Activated naive CD4-positive, alpha-beta T cell treated with anti-CD3 and anti-CD28 coated beads, Interleukin-2, amount 10 ng/mL, durations not matched to agents 7 days and 5 days (primary cell): ENCODE measurements at regions of chr12 and their contacts with region 1.

Region 1: DNA sequence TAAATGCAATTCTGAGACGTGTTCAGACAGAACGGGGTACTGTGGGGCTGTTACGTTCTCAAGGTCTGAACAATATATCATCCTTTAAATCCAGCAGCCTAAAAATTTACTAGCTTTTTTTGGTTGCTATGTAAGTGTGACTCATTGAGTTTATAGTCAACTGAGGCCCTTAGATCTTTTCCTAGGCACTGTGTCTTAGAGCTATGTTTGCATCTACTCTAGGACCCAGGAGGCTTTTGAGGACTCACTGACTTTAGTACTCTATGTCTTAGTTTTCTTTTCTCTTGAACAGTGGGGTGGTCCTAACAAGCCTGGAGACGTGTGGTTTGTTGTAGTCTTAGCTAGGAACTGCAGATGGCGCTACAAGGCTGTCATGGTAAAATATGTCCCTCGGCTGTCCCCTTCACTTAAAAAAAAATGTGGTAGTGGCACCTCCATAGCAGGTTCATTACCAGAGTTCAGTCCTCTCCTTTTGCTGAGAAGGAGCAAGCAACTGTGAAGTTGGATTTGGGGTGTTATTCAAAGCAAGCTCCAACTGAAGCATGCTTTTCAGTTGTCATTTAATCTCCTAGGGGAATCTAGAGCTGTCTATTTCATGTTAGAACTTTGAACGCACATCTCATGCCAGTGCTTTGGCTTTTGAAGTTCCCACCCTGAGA is 8.7 kb upstream of the SPATS2 start:
- DNase-seq: peak; percentile 75
- H3K4me3 Mint-ChIP-seq: no peak overlapping the region
- H3K27ac Mint-ChIP-seq: no peak overlapping the region
- H3K4me1 Mint-ChIP-seq: peaks cover 2% of the 10 kb centered on the region
- H3K27me3 Mint-ChIP-seq: peaks cover 48% of the 10 kb centered on the region

Region 2: DNA sequence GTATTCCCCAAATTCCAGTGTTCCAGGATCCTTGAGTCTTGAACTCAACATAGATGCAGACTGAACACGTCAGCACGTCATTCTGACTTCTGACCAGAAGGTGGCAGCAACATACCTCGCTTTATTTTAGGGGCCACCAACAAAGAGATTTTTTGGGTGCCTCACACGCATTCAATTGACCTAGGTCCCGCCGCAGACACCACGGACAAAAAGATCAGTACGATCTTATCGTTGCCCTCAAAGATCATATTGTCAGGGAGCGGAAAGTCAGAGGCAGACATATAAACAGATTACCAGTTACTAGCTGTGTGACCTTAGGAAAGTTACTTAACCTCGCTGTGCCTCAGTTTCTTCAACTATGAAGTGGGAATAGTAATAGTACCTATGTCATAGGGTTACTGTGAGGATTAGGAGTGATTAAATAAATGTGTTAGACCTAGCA is 70.2 kb before region 1 on chr12:
- CTCF ChIA-PET with region 1: interaction called, 91 read pairs
- DNase-seq: peak; percentile 84
- H3K4me3 Mint-ChIP-seq: no peak overlapping the region
- H3K27ac Mint-ChIP-seq: no peak overlapping the region
- H3K4me1 Mint-ChIP-seq: peaks cover 2% of the 10 kb centered on the region
- H3K27me3 Mint-ChIP-seq: peaks cover 81% of the 10 kb centered on the region

Region 3: GRCh38 chr12:49331380-49332222 is 27.0 kb before region 1 on chr12:
- CTCF ChIA-PET with region 1: interaction called, 17 read pairs
- DNase-seq: no peak
- H3K4me3 Mint-ChIP-seq: no peak overlapping the region
- H3K27ac Mint-ChIP-seq: no peak overlapping the region
- H3K4me1 Mint-ChIP-seq: peaks cover 12% of the 10 kb centered on the region
- H3K27me3 Mint-ChIP-seq: peaks cover 51% of the 10 kb centered on the region

Region 4: GRCh38 chr12:49503674-49504180 is 145.1 kb after region 1 on chr12:
- CTCF ChIA-PET with region 1: interaction called, 309 read pairs
- DNase-seq: no peak
- H3K4me3 Mint-ChIP-seq: no peak overlapping the region
- H3K27ac Mint-ChIP-seq: no peak overlapping the region
- H3K4me1 Mint-ChIP-seq: peaks cover 11% of the 10 kb centered on the region
- H3K27me3 Mint-ChIP-seq: no peaks in the 10 kb centered on the region

Region 5: DNA sequence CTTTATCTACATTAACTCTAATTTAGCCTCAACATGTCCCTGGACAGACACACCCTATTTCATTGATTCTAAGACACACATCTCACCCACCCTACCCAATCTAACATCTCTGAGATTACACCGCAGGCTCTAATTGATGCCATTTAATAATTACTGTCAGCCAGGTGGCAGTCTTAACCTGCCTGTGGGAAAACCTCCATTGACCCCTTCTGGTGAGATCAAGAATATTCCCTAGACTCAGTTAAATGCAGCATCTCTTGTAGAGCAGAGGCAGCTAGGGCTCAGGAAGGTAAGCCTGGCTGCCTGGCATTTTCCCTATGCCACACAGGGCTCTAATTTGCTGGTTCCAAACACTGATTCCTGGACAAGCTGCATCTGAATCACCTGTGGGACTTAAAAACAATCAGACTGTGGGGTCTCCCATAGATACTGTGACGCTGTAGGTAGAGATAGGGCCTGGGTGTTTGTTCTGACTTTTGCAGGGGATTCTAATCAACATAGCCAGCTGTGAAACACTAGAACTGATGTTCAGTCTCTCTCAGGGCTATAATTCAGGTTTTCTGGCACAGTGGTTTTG is 195.0 kb after region 1 on chr12:
- CTCF ChIA-PET with region 1: interaction called, 35 read pairs
- DNase-seq: peak; percentile 41
- H3K4me3 Mint-ChIP-seq: no peak overlapping the region
- H3K27ac Mint-ChIP-seq: no peak overlapping the region
- H3K4me1 Mint-ChIP-seq: peaks cover 11% of the 10 kb centered on the region
- H3K27me3 Mint-ChIP-seq: peaks cover 42% of the 10 kb centered on the region